ENCODE measurements at regions of chr15 and their contacts with region 1.

Region 1: DNA sequence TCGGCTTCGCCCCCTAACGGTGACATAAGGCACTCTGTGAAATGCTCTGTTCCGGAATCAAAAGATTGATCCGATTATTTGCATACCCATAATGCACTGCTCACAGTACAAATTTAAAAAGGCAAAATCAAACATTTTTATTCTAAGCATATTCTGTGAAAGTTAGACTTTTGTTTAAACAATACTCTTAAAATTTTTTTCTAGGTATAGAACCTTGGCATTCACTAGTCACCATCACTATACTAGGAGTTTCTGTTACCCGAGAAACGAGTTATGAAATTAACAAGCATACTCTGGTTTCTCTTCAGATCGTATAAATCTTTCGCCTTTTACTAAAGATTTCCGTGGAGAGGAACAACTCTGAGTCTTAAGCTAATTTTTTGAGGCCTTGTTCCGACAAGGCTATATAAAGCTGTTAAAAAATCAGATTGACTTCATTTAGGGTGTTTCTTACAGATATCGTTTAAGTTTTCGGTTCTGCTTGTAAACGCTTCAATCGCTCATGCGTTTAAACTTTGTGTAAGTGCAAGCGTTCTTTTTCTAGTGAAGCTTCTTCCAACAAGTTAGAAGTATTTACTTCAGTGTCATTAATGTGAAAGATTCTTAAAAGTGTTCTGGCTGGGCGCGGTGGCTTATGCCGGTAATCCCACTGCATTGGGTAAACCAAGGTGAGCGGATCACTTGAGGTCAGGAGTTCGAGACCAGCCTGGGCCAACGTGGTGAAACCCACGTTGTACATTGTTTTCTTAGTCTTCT is at the start of gene RNU5B-1:
- DNase-seq: peak; percentile 87
- ATAC-seq: peak; percentile 75
- H3K4me3 Mint-ChIP-seq: peak within 1 kb of the TSS; percentile 89
- H3K27ac Mint-ChIP-seq: peak within 1 kb of the TSS; percentile 98
- H3K4me1 Mint-ChIP-seq: peaks cover 36% of the 10 kb centered on the region
- H3K27me3 Mint-ChIP-seq: no peaks in the 10 kb centered on the region
- total RNA-seq, gene RNU5B-1: not detected

Region 2: GRCh38 chr15:64989416-64990167 is 315.0 kb before region 1 on chr15 and contains the start of gene SPG21:
- CTCF ChIA-PET with region 1: no interaction called
- POLR2A ChIA-PET with region 1: interaction called, 5 read pairs
- intact Hi-C with region 1: loop called in 1 of 2 experiments (anchors 5 kb)
- DNase-seq: peak; percentile 94
- ATAC-seq: peak; percentile 96
- H3K4me3 Mint-ChIP-seq: peak within 1 kb of the TSS; percentile 96
- H3K27ac Mint-ChIP-seq: peak within 1 kb of the TSS; percentile 88
- H3K4me1 Mint-ChIP-seq: peaks cover 37% of the 10 kb centered on the region
- H3K27me3 Mint-ChIP-seq: no peaks in the 10 kb centered on the region
- total RNA-seq, gene SPG21: 74.1 to 79.1 TPM

Region 3: GRCh38 chr15:65133548-65134200 is 170.9 kb before region 1 on chr15 and contains the start of gene PDCD7:
- CTCF ChIA-PET with region 1: interaction called, 5 read pairs
- POLR2A ChIA-PET with region 1: interaction called, 10 read pairs
- intact Hi-C with region 1: loop called (anchors 1 to 5 kb)
- DNase-seq: peak; percentile 91
- ATAC-seq: peak; percentile 96
- H3K4me3 Mint-ChIP-seq: peak within 1 kb of the TSS; percentile 85
- H3K27ac Mint-ChIP-seq: peak within 1 kb of the TSS; percentile 93
- H3K4me1 Mint-ChIP-seq: peaks cover 26% of the 10 kb centered on the region
- H3K27me3 Mint-ChIP-seq: no peaks in the 10 kb centered on the region
- total RNA-seq, gene PDCD7: 16.6 to 24.8 TPM

Region 4: DNA sequence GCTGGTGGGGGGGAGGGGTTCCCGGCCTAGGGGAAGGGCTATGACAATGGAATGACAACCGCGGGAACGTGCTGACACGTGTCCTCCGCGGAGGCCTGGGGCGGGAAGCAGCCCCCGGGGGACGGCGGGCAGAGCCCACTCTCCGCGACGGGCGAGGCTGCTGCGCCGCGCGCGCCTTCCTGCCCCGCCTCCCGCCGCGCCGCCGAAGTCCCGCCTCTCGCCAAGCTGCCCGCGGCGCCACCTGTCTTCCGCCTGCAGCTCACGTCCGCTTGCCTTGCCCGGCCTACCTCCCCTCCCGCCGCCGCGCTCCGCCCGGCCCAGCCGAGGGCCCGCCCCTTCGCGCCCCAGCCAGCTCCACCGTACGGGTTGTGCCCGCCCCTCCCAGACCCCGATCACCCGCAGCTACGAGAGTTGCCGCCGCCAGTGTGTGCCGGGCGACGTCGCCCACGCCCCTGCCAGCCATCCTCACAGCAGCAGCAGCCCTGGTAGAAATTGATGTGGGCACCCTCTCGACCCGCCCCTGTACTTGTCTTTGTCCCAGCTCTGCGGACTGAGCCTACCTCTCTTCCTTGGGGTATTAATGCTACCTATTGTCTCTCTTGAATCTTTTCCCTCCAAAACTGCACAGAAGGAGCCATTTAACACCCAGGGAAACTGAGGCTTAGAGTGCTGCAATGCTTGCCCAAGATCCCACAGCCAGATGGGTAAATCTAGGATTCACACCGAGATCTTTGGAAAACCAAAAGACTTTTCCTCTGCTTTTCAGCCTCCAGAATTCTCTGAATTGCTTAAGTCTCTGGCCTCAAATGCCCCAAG is 17.7 kb before region 1 on chr15 and contains the start of gene PARP16:
- CTCF ChIA-PET with region 1: interaction called, 20 read pairs
- POLR2A ChIA-PET with region 1: interaction called, 137 read pairs
- intact Hi-C with region 1: loop called in 1 of 2 experiments (anchors 1 kb)
- DNase-seq: peak; percentile 96
- ATAC-seq: peak; percentile 98
- H3K4me3 Mint-ChIP-seq: peak within 1 kb of the TSS; percentile 87
- H3K27ac Mint-ChIP-seq: peak within 1 kb of the TSS; percentile 89
- H3K4me1 Mint-ChIP-seq: peaks cover 30% of the 10 kb centered on the region
- H3K27me3 Mint-ChIP-seq: no peaks in the 10 kb centered on the region
- total RNA-seq, gene PARP16: 17.9 to 20.1 TPM

Region 5: DNA sequence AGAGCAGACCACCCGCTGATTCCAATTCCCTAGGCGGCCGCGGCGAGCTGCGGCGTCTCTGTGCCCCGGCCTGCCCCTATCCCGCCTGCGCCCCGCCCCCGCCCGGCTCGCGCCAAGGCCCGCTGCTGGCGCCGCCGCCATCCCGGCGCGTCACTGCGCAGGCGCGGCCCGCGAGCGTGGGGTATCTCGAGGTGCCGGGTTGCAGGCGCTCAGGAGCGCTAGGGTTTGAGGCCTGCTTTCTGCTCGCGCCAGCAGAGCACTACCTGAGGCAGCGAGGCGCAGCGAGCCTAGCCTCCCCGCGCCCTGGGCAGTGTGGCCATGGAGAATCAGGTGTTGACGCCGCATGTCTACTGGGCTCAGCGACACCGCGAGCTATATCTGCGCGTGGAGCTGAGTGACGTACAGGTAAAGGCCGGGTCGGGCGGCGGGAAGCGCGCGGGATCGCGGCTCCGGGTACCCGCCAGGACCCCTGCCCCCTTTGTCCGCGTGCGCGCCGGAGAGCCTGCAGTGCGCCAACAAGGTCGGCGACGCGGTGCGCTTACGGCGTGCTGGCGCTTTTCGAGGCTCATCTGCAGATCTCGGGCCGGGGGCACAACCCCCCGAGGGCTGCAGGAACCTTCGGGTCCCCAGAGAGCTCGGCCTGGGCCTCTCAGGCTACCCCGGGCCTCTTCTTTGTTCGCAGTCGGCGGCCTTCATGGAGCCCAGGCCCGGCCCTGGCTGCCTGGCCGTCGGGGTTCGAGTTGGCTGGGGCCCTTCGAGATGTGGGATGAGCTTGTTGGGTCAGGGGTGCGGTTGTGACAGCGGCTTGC is 226.0 kb after region 1 on chr15 and contains the start of gene HACD3:
- CTCF ChIA-PET with region 1: no interaction called
- POLR2A ChIA-PET with region 1: interaction called, 6 read pairs
- intact Hi-C with region 1: loop called in 1 of 2 experiments (anchors 5 kb)
- DNase-seq: peak; percentile 95
- ATAC-seq: peak; percentile 93
- H3K4me3 Mint-ChIP-seq: peak within 1 kb of the TSS; percentile 78
- H3K27ac Mint-ChIP-seq: peak within 1 kb of the TSS; percentile 91
- H3K4me1 Mint-ChIP-seq: peaks cover 32% of the 10 kb centered on the region
- H3K27me3 Mint-ChIP-seq: no peaks in the 10 kb centered on the region
- total RNA-seq, gene HACD3: 23.4 to 27.3 TPM

Region 6: DNA sequence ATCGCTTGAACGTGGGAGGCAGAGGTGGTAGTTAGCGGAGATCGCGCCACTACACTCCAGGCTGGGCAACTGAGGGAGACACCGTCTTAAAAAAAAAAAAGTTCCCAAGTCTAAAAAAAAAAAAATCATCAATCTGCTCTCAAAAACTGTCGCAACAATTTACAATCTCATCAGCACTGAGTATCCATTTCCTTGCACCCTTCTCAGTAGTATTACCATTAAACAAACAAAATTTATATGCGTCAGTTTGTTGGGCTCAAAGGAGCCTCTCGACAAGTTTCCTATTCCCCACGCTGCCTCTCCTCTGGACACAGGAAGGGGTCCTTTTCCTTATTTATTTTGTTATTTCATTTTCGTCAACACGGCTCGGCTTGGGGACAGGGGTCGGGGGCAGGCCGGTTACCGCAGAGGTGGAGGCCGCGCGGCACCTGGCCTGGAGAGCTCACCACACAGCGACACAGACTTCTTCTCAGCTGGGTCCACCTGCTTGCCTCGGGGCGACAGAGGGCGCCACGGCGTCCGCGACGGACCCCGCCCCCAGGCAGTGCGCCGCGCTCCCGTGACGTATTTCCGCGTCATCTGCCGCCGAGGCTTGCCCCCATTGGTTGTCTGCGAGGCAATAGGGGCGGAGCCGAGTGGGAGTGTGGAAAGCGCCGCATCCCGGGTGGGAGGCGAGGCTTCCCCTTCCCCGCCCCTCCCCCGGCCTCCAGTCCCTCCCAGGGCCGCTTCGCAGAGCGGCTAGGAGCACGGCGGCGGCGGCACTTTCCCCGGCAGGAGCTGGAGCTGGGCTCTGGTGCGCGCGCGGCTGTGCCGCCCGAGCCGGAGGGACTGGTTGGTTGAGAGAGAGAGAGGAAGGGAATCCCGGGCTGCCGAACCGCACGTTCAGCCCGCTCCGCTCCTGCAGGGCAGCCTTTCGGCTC is 1081.9 kb after region 1 on chr15 and contains the start of gene MAP2K1:
- CTCF ChIA-PET with region 1: no interaction called
- POLR2A ChIA-PET with region 1: no interaction called
- intact Hi-C with region 1: loop called in 1 of 2 experiments (anchors 10 kb)
- DNase-seq: peak; percentile 99
- ATAC-seq: peak; percentile 84
- H3K4me3 Mint-ChIP-seq: peak within 1 kb of the TSS; percentile 95
- H3K27ac Mint-ChIP-seq: peak within 1 kb of the TSS; percentile 100
- H3K4me1 Mint-ChIP-seq: peaks cover 44% of the 10 kb centered on the region
- H3K27me3 Mint-ChIP-seq: no peaks in the 10 kb centered on the region
- total RNA-seq, gene MAP2K1: 94.9 to 115 TPM